ENCODE measurements at regions of chr9 and their contacts with region 1.

Region 1: GRCh38 chr9:128863647-128864046 is 18.1 kb downstream of the KYAT1 start:
- DNase-seq: peak; percentile 73 to 92 (median 82)
- ATAC-seq: peak; percentile 98
- H3K4me3 ChIP-seq: no peak overlapping the region
- H3K4me3 Mint-ChIP-seq: no peak overlapping the region
- H3K27ac ChIP-seq: no peak overlapping the region
- H3K27ac Mint-ChIP-seq: peak overlapping the region; percentile 36
- H3K4me1 ChIP-seq: peaks cover 5% of the 10 kb centered on the region
- H3K4me1 Mint-ChIP-seq: peaks cover 4% of the 10 kb centered on the region
- H3K27me3 ChIP-seq: no peaks in the 10 kb centered on the region
- H3K27me3 Mint-ChIP-seq: no peaks in the 10 kb centered on the region
- CTCF ChIP-seq: peak; percentile 92

Region 2: GRCh38 chr9:128902351-128903078 is 38.9 kb after region 1 on chr9:
- CTCF ChIA-PET with region 1: no interaction called
- POLR2A ChIA-PET with region 1: no interaction called
- intact Hi-C with region 1: loop called in 1 of 2 experiments (anchors 2 kb)
- DNase-seq: peak; percentile 79 to 95 (median 90)
- ATAC-seq: peak; percentile 93
- H3K4me3 ChIP-seq: peak overlapping the region; percentile 45
- H3K4me3 Mint-ChIP-seq: peak overlapping the region; percentile 81
- H3K27ac ChIP-seq: peak overlapping the region; percentile 95 to 96
- H3K27ac Mint-ChIP-seq: peak overlapping the region; percentile 95
- H3K4me1 ChIP-seq: peaks cover 82% of the 10 kb centered on the region
- H3K4me1 Mint-ChIP-seq: peaks cover 74% of the 10 kb centered on the region
- H3K27me3 ChIP-seq: no peaks in the 10 kb centered on the region
- H3K27me3 Mint-ChIP-seq: no peaks in the 10 kb centered on the region
- CTCF ChIP-seq: no peak

Region 3: GRCh38 chr9:128927731-128928411 is 64.2 kb after region 1 on chr9:
- CTCF ChIA-PET with region 1: interaction called, 29 read pairs
- POLR2A ChIA-PET with region 1: interaction called, 5 read pairs
- intact Hi-C with region 1: loop called (anchors 1 kb)
- DNase-seq: peak; percentile 38 to 77 (median 46)
- ATAC-seq: peak; percentile 84
- H3K4me3 ChIP-seq: no peak overlapping the region
- H3K4me3 Mint-ChIP-seq: no peak overlapping the region
- H3K27ac ChIP-seq: no peak overlapping the region
- H3K27ac Mint-ChIP-seq: no peak overlapping the region
- H3K4me1 ChIP-seq: peaks cover 16% of the 10 kb centered on the region
- H3K4me1 Mint-ChIP-seq: peaks cover 19% of the 10 kb centered on the region
- H3K27me3 ChIP-seq: no peaks in the 10 kb centered on the region
- H3K27me3 Mint-ChIP-seq: no peaks in the 10 kb centered on the region
- CTCF ChIP-seq: peak; percentile 98